ENCODE measurements at regions of chr1 and their contacts with region 1.

Region 1: DNA sequence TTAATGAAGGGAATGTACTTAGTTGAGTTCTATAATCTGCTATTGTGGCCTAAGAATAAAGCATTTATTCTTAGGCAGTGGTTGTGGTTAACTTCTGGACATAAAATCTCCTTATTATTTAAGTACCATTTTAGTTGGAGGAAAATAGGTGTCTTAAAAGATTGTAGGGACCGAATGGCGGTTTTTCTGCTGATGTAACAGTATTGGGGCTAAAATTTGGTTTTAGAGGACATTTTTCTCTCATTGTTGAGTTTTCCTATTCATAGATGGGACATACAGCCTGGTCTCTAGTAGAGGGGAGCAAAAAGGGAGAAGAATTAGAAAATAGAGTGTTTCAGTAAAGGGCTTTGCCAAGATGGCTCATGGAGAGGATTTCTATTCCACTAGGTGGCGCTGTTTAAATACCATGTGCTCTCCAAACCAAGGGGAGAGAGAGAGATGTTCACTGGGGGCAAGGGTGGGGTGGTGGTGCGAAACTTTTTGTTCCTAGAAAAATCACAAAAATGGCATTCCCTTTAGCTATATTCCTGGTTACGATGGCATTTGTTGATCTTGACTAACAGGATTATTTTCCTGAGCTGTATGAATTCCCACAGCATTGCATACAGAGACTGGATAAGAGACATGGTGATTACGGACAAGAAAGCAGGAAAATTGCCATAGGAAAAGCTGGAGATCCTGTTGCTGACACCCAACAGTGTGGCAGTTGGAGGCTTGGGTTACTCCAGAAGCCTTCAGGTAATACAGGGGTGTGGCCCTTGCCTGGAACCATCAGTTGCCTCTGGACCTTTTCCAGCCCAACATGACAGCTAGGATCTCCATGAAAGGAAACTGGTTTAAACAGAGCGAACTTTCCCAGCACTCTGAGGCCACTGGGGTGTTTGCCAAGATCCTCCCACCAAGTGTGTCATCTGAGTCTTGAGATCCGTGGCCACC is 18.2 kb upstream of the FCGR2A start:
- DNase-seq: no peak
- H3K4me3 ChIP-seq: no peak overlapping the region
- H3K27ac ChIP-seq: no peak overlapping the region
- H3K4me1 ChIP-seq: no peaks in the 10 kb centered on the region
- H3K27me3 ChIP-seq: peaks cover 0 to 11% (median 2%) of the 10 kb centered on the region in 3 donors
- CTCF ChIP-seq: peak; percentile 27 to 78 (median 58)
- EP300 ChIP-seq: no peak
- POLR2A ChIP-seq: no peak

Region 2: DNA sequence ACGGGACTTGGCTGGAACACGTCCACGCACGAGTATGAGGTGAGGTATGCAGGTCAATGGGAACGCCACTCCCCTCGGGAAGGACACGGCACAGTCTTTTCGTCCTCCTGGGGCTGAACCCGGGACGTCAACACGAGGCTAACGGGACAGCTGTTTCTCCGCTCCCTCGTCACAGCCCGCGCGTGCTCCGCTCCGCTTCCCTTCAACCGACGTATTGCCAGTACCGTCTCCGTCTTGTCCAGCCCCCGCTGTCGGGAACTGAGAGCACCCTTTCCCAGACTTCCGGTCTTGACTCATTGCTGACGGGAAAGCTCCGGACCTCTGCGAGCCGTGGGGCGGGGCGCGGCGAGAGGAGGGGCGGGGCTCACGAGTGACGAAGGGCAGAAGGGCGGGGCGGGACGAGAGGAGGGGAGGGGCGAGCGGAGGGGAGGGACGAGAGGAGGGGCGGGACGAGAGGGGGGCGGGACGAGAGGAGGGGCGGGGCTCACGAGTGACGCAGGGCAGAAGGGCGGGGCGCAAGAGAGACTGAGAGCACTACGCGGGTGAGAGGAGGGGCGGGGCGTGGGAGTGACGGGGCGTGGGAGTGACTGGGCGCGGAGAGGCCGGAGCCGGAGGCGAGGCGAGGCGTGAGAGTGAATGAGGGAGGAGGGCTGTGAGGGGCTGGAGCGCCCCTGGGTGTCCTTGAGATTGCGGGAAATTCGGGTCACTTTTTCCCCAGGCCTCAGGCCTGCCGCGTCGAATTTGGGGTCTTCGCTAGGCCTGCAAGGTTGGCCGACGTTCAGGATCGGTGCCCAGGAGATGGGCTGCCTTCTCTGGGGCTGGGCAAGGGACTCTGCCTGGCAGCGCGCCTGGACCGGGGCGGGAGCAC is 97.1 kb before region 1 on chr1:
- intact Hi-C with region 1: no loop called
- DNase-seq: peak; percentile 99
- H3K4me3 ChIP-seq: peak overlapping the region; percentile 43 to 68 (median 60)
- H3K27ac ChIP-seq: peak overlapping the region; percentile 90 to 94 (median 93)
- H3K4me1 ChIP-seq: peaks cover 0 to 13% (median 8%) of the 10 kb centered on the region in 4 donors
- H3K27me3 ChIP-seq: no peaks in the 10 kb centered on the region
- CTCF ChIP-seq: no peak
- EP300 ChIP-seq: peak; percentile 95 to 100 (median 98)
- POLR2A ChIP-seq: peak; percentile 85 to 91

Region 3: GRCh38 chr1:161749509-161750407 is 262.7 kb after region 1 on chr1 and contains the start of gene DUSP12:
- intact Hi-C with region 1: loop called (anchors 10 kb)
- DNase-seq: peak; percentile 96
- H3K4me3 ChIP-seq: peak within 1 kb of the TSS; percentile 74 to 94 (median 74)
- H3K27ac ChIP-seq: peak within 1 kb of the TSS; percentile 83 to 94 (median 87)
- H3K4me1 ChIP-seq: peaks cover 0 to 25% (median 12%) of the 10 kb centered on the region in 4 donors
- H3K27me3 ChIP-seq: no peaks in the 10 kb centered on the region
- CTCF ChIP-seq: no peak
- EP300 ChIP-seq: no peak
- POLR2A ChIP-seq: no peak
- total RNA-seq, gene DUSP12: 12.7 to 40.3 (median 24.1) TPM

Region 4: GRCh38 chr1:162035241-162035640 is 548.2 kb after region 1 on chr1:
- intact Hi-C with region 1: loop called (anchors 10 kb)
- DNase-seq: no peak
- H3K4me3 ChIP-seq: no peak overlapping the region
- H3K27ac ChIP-seq: no peak overlapping the region
- H3K4me1 ChIP-seq: peaks cover 0 to 9% (median 0%) of the 10 kb centered on the region in 4 donors
- H3K27me3 ChIP-seq: no peaks in the 10 kb centered on the region
- CTCF ChIP-seq: no peak
- EP300 ChIP-seq: no peak
- POLR2A ChIP-seq: no peak

Measured in sigmoid colon (tissue), 7 donors.